ENCODE measurements at regions of chr6 and their contacts with region 1.

Region 1: DNA sequence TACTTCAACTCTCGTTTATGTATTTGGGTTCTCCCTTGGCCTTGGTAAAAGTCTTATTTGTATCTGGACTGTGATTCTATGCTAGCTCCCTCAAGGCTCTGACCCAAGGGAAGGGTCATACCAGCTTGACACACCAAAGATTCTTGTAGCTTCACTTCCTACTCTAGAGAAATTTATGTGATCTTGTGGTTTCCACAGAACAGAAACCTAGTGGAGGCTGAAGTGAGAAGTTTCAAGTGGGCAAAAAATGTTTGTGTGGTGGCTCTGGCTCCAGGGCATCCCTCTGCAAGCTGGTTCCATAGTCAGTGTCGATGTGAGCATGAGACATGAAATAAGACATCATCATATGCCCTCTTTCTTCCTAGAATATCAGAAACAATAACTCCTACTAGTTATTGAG is 48.1 kb upstream of the TNFRSF21 start:
- DNase-seq: peak; percentile 59
- H3K4me3 ChIP-seq: peak overlapping the region; percentile 7
- H3K27ac ChIP-seq: peak overlapping the region; percentile 98
- H3K4me1 ChIP-seq: peaks cover 78% of the 10 kb centered on the region
- CTCF ChIP-seq: no peak

Region 2: GRCh38 chr6:47242483-47243386 is 115.1 kb before region 1 on chr6:
- CTCF ChIA-PET with region 1: no interaction called
- POLR2A ChIA-PET with region 1: interaction called, 4 read pairs
- intact Hi-C with region 1: loop called (anchors 1 kb)
- DNase-seq: peak; percentile 98
- H3K4me3 ChIP-seq: peak overlapping the region; percentile 46
- H3K27ac ChIP-seq: peak overlapping the region; percentile 92
- H3K4me1 ChIP-seq: peaks cover 84% of the 10 kb centered on the region
- CTCF ChIP-seq: no peak

Region 3: DNA sequence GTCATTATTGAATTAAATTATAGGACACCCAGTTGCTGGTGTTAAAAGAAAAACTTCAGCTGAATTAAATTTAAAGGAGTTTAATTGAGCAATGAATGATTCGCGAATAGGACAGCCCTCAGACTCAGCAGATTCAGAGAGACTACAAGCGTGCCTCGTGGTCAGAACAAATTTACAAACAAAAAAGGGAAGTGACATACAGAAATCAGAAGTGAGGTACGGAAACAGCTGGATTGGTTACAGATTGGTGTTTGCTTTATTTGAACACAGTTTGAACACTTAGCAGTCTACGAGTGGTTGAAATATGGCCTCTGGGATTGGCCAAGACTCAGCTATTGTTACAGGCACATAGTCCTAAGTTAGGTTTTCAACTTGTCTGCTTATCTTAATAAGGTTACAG is 22.4 kb before region 1 on chr6:
- CTCF ChIA-PET with region 1: interaction called, 4 read pairs
- POLR2A ChIA-PET with region 1: interaction called, 28 read pairs
- intact Hi-C with region 1: loop called (anchors 1 kb)
- DNase-seq: peak; percentile 84
- H3K4me3 ChIP-seq: peak overlapping the region; percentile 19
- H3K27ac ChIP-seq: peak overlapping the region; percentile 70
- H3K4me1 ChIP-seq: peaks cover 38% of the 10 kb centered on the region
- CTCF ChIP-seq: no peak

Region 4: DNA sequence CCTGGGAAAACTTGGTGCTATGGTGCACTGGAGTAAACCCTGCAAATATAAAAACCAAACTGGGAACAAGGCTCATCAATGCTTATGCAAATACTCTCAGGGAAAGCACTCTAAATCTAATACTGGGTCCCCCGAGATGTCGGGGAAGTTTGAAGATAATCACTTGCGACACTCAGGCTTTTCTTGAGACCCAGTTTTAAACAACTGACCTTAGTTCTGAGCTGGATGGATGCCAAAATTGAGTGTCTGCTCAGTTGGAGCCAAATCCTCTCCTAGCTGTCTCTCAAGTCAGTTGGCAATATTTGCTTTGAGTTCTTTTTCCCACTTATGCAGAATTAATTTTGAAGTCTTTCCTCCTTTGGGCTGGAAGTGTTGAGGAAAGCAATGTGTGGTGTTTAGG is 44.3 kb after region 1 on chr6:
- CTCF ChIA-PET with region 1: no interaction called
- POLR2A ChIA-PET with region 1: interaction called, 12 read pairs
- intact Hi-C with region 1: loop called (anchors 2 kb)
- DNase-seq: no peak
- H3K4me3 ChIP-seq: no peak overlapping the region
- H3K27ac ChIP-seq: no peak overlapping the region
- H3K4me1 ChIP-seq: peaks cover 34% of the 10 kb centered on the region
- CTCF ChIP-seq: no peak

Region 5: DNA sequence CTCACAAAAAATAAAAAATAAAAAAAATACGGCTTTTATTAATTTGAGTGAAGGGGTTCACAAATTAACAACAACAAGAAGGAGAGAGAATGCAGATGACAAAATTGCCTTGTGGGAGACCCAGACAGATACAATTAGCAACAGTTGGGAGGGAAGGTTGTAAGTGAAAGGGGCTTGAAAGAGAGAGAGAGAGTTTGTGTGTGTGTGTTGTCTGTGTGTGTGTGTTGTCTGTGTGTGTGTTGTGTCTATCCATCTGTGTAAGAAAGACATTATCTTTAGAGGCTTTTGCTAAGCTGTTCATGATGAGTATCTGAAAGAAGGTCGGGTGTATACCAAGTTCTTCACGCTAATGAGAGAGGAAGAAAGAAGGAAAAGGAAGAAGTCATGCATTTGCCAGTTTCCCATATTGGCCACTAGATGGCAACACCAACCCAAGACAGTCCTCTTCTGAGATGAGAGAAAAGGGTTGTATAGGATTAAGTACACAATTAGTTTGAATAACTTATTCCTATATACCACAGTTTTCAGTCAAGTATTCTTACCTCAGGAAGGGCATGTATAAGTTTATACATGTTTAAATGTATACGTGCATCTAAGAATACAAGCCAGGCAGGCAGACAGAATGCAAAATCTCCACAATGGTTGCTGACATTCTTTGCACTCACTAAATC is 56.1 kb after region 1 on chr6:
- CTCF ChIA-PET with region 1: no interaction called
- POLR2A ChIA-PET with region 1: interaction called, 12 read pairs
- intact Hi-C with region 1: loop called (anchors 2 kb)
- DNase-seq: peak; percentile 82
- H3K4me3 ChIP-seq: peak overlapping the region; percentile 64
- H3K27ac ChIP-seq: peak overlapping the region; percentile 52
- H3K4me1 ChIP-seq: peaks cover 23% of the 10 kb centered on the region
- CTCF ChIP-seq: peak; percentile 99

Region 6: GRCh38 chr6:47822856-47823554 is 465.2 kb after region 1 on chr6:
- CTCF ChIA-PET with region 1: no interaction called
- POLR2A ChIA-PET with region 1: no interaction called
- intact Hi-C with region 1: no loop called
- DNase-seq: no peak
- H3K4me3 ChIP-seq: no peak overlapping the region
- H3K27ac ChIP-seq: no peak overlapping the region
- H3K4me1 ChIP-seq: no peaks in the 10 kb centered on the region
- CTCF ChIP-seq: no peak